ENCODE measurements at regions of chr17 and their contacts with region 1.

Region 1: GRCh38 chr17:43832976-43833829 is at the start of gene MPP3:
- DNase-seq: peak; percentile 82
- ATAC-seq: peak; percentile 92 to 93
- total RNA-seq, gene MPP3: 30.7 to 74.2 TPM

Region 2: DNA sequence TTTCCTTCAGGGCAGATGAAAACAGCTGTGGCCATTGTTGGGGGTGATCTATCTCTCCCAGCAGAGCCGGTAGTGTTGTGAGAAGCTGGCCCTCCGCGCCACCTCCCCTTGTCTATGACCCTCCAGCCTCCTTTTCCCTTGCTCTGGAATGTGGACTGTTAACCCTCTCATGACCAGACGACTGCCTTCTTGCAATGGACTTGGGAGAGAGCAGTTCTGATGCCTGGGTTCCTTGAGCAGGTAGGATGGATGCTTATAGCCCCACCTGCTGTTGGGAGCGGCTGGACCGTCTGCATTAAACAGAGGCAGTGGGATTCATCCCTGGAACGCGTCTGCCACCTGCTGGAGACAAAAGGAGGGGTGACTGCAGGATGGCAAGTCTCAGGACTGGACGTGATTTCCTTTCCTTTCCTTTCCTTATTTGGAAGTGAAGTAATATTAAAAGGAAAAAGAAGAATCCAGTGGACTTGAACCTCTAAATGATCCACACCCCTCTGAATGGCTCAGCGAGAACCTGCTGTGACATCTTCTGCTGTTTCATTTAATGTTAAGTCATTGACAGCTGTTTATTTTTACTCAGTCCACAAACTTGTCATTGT is 72.8 kb before region 1 on chr17:
- intact Hi-C with region 1: no loop called
- DNase-seq: peak; percentile 93
- ATAC-seq: peak; percentile 91 to 94

Region 3: DNA sequence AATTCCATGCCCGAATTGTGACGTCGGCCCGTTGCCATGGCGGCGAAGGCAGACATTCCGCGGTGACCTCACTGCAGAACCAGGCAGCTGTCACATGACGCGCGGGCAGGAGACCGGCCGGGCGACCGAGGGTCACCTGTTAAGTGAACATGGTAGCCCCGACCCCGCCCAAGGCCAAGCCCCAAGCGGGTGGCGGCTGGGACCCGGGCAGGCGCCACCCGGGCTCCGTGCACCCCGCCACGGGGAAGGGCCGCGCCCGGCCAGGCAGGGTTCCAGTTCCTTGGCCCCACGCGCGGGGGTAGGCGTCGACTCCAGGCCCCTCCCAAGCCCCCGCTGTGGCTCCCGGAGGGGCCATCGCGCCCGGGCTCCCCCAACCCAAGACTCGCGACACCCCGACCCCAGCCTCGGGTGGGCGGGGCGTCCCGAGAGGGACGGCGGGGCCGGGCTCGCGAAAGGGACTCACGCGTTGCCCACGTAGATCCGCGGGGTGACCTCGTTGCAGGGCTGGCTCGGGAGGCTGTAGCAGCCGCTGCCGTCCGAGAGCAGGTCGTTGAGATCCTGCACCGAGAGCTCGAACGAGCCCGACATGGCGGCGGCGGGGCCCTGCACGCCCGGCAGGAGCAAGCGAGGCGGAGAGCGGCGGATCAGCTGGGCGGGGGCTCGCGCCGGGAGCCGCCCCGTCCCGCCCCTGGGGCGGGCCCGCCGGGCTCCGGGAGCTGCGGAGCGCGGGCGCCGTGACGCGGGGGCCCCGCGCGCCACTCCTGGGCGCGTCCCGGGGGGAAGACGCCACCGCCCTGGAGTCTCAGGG is 54.7 kb before region 1 on chr17 and contains the start of gene DUSP3:
- intact Hi-C with region 1: loop called in 1 of 2 experiments (anchors 5 kb)
- DNase-seq: peak; percentile 97
- ATAC-seq: peak; percentile 96
- total RNA-seq, gene DUSP3: 149 to 204 TPM